H1 (cell line): ENCODE measurements at regions of chr19 and their contacts with region 1.

Region 1: GRCh38 chr19:3586124-3586626 is 897 bp downstream of the GIPC3 start:
- DNase-seq: peak in 1 of 2 experiments; percentile 89
- H3K4me3 ChIP-seq: peak overlapping the region in 3 of 4 experiments; percentile 27 to 63 (median 34); a peak in 4 of 8 replicates
- H3K27ac ChIP-seq: no peak overlapping the region
- H3K4me1 ChIP-seq: peaks cover 0 to 4% (median 0%) of the 10 kb centered on the region in 4 experiments; a peak in 3 of 7 replicates
- H3K27me3 ChIP-seq: peaks cover 11 to 21% (median 14%) of the 10 kb centered on the region in 4 experiments; a peak in 6 of 7 replicates
- CTCF ChIP-seq: peak; percentile 64 to 93 (median 66)
- EP300 ChIP-seq: no peak
- POLR2A ChIP-seq: no peak
- RAD21 ChIP-seq: peak; percentile 68 to 81

Region 2: GRCh38 chr19:3599776-3600183 is 13.6 kb after region 1 on chr19:
- CTCF ChIA-PET with region 1: interaction called, 16 read pairs
- POLR2A ChIA-PET with region 1: interaction called, 3 read pairs
- DNase-seq: peak in 1 of 2 experiments; percentile 74
- H3K4me3 ChIP-seq: no peak overlapping the region
- H3K27ac ChIP-seq: no peak overlapping the region
- H3K4me1 ChIP-seq: no peaks in the 10 kb centered on the region
- H3K27me3 ChIP-seq: peaks cover 0 to under 1% (median 0%) of the 10 kb centered on the region in 4 experiments; a peak in 2 of 7 replicates
- CTCF ChIP-seq: peak; percentile 55 to 78 (median 69)
- EP300 ChIP-seq: no peak
- POLR2A ChIP-seq: no peak
- RAD21 ChIP-seq: peak; percentile 42 to 65

Region 3: GRCh38 chr19:3606690-3607289 is 20.6 kb after region 1 on chr19 and contains the start of gene TBXA2R:
- CTCF ChIA-PET with region 1: interaction called, 18 read pairs
- POLR2A ChIA-PET with region 1: interaction called, 4 read pairs
- DNase-seq: peak in 1 of 2 experiments; percentile 93
- H3K4me3 ChIP-seq: peak within 1 kb of the TSS; percentile 15 to 64 (median 36)
- H3K27ac ChIP-seq: no peak within 1 kb of the TSS
- H3K4me1 ChIP-seq: peaks cover 3 to 14% (median 12%) of the 10 kb centered on the region in 4 experiments
- H3K27me3 ChIP-seq: peaks cover 0 to 16% (median 13%) of the 10 kb centered on the region in 4 experiments; a peak in 5 of 7 replicates
- CTCF ChIP-seq: 0 out of 4 replicates have a peak, but pooled peaks of 1 of the 3 experiments have one; percentile 1
- EP300 ChIP-seq: no peak
- POLR2A ChIP-seq: no peak
- RAD21 ChIP-seq: no peak
- total RNA-seq, gene TBXA2R: 0.50 and 0.75 TPM in 2 replicates

Region 4: DNA sequence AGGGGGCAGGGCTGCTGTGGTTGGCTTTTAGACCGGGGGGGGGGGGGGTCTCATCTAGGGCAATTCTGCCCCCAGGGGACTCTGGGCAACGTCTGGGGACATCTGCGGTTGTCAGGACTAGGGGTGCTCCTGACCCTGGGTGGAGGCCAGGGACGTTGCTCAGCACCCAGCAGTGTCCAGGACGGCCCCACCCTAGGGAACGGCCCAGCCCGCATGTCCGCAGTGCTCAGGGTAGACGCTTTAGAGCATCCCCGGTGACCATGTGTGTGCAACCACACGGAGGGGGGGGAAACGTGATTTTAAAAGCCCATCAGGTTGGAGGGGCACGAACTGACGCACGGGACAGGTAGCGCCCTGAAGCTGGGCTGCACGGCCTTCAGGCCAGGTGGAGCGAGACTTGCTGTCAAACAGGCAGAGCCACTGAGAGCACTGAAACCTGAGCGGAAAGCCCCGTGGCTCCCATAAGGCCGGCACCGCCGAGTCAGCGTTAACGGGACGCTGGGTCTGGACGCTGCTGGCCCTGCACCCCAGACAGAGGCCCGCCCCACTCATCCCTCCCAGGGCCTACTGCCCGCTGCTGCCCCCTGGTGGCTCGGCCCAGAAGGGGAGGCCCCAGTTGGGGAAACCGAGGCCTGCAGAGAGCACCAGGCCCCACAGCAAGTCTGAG is 32.1 kb after region 1 on chr19:
- CTCF ChIA-PET with region 1: interaction called, 38 read pairs
- POLR2A ChIA-PET with region 1: interaction called, 3 read pairs
- DNase-seq: peak in 1 of 2 experiments; percentile 96
- H3K4me3 ChIP-seq: no peak overlapping the region
- H3K27ac ChIP-seq: no peak overlapping the region
- H3K4me1 ChIP-seq: peaks cover 0 to 3% (median under 1%) of the 10 kb centered on the region in 4 experiments; a peak in 3 of 7 replicates
- H3K27me3 ChIP-seq: no peaks in the 10 kb centered on the region
- CTCF ChIP-seq: peak; percentile 86 to 92 (median 86)
- EP300 ChIP-seq: no peak
- POLR2A ChIP-seq: no peak
- RAD21 ChIP-seq: peak; percentile 68 to 80

Region 5: DNA sequence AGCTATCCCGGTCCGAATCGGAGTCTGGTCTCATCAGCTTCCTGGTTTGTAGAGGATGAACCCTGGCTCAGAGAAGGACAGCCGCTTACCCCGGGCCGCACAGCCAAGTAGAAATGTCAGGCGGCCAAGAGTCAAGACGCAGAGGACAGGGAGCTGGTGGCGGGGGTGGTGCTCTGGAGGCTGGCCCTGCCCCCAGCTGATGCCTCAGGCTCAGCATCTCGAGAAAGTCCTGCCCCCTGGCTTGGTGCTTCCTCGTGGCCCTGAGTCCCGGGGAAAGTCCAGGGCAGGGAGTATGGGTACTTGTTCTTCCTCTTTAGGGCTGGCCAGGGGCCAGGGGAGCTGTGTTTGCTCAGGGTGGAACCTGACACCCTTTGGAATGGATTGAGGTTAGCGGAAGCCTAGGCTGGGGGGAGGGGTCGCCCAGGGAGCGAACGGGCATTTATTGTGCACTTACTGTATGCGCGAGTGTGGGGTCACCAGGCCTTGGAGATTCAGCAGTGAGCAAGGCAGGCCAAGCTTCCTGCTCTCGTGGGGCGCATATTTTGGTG is 124.2 kb after region 1 on chr19:
- CTCF ChIA-PET with region 1: interaction called, 10 read pairs
- POLR2A ChIA-PET with region 1: no interaction called
- DNase-seq: peak in 1 of 2 experiments; percentile 65
- H3K4me3 ChIP-seq: no peak overlapping the region
- H3K27ac ChIP-seq: no peak overlapping the region
- H3K4me1 ChIP-seq: peaks cover 0 to 20% (median 14%) of the 10 kb centered on the region in 4 experiments; a peak in 4 of 7 replicates
- H3K27me3 ChIP-seq: peaks cover 0 to 3% (median 0%) of the 10 kb centered on the region in 4 experiments; a peak in 1 of 7 replicates
- CTCF ChIP-seq: no peak
- EP300 ChIP-seq: no peak
- POLR2A ChIP-seq: no peak
- RAD21 ChIP-seq: no peak

Region 6: GRCh38 chr19:3780786-3781304 is 194.7 kb after region 1 on chr19:
- CTCF ChIA-PET with region 1: no interaction called
- POLR2A ChIA-PET with region 1: no interaction called
- DNase-seq: no peak
- H3K4me3 ChIP-seq: no peak overlapping the region
- H3K27ac ChIP-seq: no peak overlapping the region
- H3K4me1 ChIP-seq: peaks cover 0 to 9% (median 1%) of the 10 kb centered on the region in 4 experiments; a peak in 3 of 7 replicates
- H3K27me3 ChIP-seq: peaks cover 0 to 14% (median 6%) of the 10 kb centered on the region in 4 experiments; a peak in 5 of 7 replicates
- CTCF ChIP-seq: no peak
- EP300 ChIP-seq: no peak
- POLR2A ChIP-seq: no peak
- RAD21 ChIP-seq: no peak